Activated CD4-positive, alpha-beta T cell treated with anti-CD3 and anti-CD28 coated beads for 36 hours (primary cell): ENCODE measurements at regions of chr11 and their contacts with region 1.

Region 1: GRCh38 chr11:44621140-44621681 is 55.7 kb downstream of the CD82 start:
- DNase-seq: peak; percentile 78
- ATAC-seq: peak; percentile 52
- H3K4me3 Mint-ChIP-seq: no peak overlapping the region
- H3K27ac Mint-ChIP-seq: no peak overlapping the region
- H3K4me1 Mint-ChIP-seq: peaks cover 38% of the 10 kb centered on the region
- H3K27me3 Mint-ChIP-seq: no peaks in the 10 kb centered on the region

Region 2: GRCh38 chr11:44519989-44520737 is 101.0 kb before region 1 on chr11:
- CTCF ChIA-PET with region 1: interaction called, 11 read pairs
- POLR2A ChIA-PET with region 1: no interaction called
- intact Hi-C with region 1: no loop called
- DNase-seq: no peak
- ATAC-seq: no peak
- H3K4me3 Mint-ChIP-seq: no peak overlapping the region
- H3K27ac Mint-ChIP-seq: no peak overlapping the region
- H3K4me1 Mint-ChIP-seq: peaks cover 2% of the 10 kb centered on the region
- H3K27me3 Mint-ChIP-seq: peaks cover 12% of the 10 kb centered on the region

Region 3: GRCh38 chr11:44551456-44552139 is 69.6 kb before region 1 on chr11:
- CTCF ChIA-PET with region 1: interaction called, 77 read pairs
- POLR2A ChIA-PET with region 1: no interaction called
- intact Hi-C with region 1: loop called in 1 of 2 experiments (anchors 1 kb)
- DNase-seq: no peak
- ATAC-seq: peak; percentile 62
- H3K4me3 Mint-ChIP-seq: no peak overlapping the region
- H3K27ac Mint-ChIP-seq: no peak overlapping the region
- H3K4me1 Mint-ChIP-seq: no peaks in the 10 kb centered on the region
- H3K27me3 Mint-ChIP-seq: no peaks in the 10 kb centered on the region

Region 4: DNA sequence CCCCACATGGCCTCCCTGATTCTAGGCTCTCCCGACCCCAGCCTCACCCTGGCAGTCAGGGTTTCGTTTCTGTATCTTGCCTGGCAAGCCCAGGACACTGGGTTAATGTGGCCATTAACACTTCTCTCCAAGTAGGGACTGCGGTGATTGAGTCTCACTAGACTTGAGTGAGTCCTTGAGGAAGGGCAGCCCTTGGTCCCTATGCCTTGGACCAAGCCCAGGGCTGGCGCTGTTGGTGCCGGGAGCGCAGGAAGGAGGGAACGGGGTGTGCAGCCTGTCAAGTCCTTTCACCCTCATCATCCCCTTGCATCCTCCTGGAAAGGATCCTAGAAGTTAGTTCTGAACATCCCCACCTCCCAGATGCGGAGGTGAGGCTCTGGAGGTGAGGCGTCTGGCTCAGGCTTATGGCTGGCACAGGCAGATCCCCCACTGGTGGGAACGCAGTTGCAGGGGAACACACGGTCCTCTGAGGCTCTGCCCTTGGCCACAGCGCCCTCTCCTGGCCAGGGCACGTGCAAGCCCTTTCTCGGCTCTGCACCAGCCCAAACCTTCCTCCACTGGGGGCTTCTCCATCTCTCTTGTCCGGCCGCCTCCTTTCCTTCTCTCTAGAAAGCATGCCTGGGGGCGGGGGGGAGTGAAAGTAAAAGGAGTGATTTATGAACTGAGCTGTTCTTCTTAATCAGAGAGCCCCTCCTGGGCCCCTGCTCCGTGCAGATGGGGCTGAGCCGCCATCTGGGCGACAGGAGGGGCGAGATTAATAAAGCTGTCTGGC is 272.8 kb after region 1 on chr11:
- CTCF ChIA-PET with region 1: interaction called, 11 read pairs
- POLR2A ChIA-PET with region 1: no interaction called
- intact Hi-C with region 1: loop called (anchors 1 to 5 kb)
- DNase-seq: peak; percentile 79
- ATAC-seq: peak; percentile 93
- H3K4me3 Mint-ChIP-seq: no peak overlapping the region
- H3K27ac Mint-ChIP-seq: no peak overlapping the region
- H3K4me1 Mint-ChIP-seq: peaks cover 1% of the 10 kb centered on the region
- H3K27me3 Mint-ChIP-seq: no peaks in the 10 kb centered on the region

Region 5: GRCh38 chr11:44911029-44911814 is 290.0 kb after region 1 on chr11:
- CTCF ChIA-PET with region 1: interaction called, 6 read pairs
- POLR2A ChIA-PET with region 1: no interaction called
- intact Hi-C with region 1: loop called (anchors 1 kb)
- DNase-seq: peak; percentile 93
- ATAC-seq: peak; percentile 91
- H3K4me3 Mint-ChIP-seq: no peak overlapping the region
- H3K27ac Mint-ChIP-seq: no peak overlapping the region
- H3K4me1 Mint-ChIP-seq: peaks cover 3% of the 10 kb centered on the region
- H3K27me3 Mint-ChIP-seq: no peaks in the 10 kb centered on the region

Region 6: DNA sequence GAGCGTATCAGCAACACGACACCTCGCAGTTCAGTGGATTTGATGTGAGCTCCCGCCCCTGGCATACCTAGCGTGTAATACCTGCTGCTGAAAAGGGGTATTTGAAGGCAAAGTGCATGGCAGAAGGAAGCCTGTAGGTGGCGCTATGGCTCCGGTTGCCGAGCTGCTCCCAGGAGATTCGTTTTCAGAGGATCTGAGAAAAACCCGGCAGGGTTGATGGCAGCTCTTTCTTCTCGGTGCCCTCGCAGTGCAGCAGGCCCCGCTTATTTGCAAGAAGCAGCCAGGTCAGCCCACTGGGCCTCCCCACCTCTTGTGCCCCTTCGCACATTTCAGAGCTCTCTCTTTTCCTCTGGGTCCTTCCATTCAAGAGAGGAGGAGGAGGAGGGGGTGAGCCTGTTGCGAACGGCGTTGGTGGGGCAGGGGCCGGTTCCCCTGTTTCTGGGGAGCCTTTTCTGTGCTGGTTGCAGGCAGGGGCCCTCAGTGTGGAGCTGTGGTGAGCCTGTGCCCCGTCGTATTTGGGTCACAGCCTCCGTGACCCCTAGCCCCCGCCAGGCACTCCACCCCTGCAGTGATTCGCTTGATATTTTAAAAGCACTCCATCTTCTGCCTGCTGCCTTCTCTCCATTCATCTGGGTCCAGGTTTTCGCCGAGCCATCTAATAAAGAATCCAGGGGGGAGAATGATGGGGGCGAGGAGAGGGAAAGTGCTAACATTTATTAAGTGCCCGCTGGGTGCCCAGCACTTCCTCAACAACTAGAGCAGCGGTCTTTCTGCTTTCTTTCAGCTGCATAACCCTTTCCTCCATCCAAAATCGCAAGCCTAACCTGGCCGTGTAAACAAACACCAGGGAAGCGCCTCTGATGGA is 750.3 kb after region 1 on chr11:
- CTCF ChIA-PET with region 1: no interaction called
- POLR2A ChIA-PET with region 1: no interaction called
- intact Hi-C with region 1: no loop called
- DNase-seq: peak; percentile 84
- ATAC-seq: peak; percentile 76
- H3K4me3 Mint-ChIP-seq: no peak overlapping the region
- H3K27ac Mint-ChIP-seq: no peak overlapping the region
- H3K4me1 Mint-ChIP-seq: peaks cover 16% of the 10 kb centered on the region
- H3K27me3 Mint-ChIP-seq: peaks cover 10% of the 10 kb centered on the region

Region 7: DNA sequence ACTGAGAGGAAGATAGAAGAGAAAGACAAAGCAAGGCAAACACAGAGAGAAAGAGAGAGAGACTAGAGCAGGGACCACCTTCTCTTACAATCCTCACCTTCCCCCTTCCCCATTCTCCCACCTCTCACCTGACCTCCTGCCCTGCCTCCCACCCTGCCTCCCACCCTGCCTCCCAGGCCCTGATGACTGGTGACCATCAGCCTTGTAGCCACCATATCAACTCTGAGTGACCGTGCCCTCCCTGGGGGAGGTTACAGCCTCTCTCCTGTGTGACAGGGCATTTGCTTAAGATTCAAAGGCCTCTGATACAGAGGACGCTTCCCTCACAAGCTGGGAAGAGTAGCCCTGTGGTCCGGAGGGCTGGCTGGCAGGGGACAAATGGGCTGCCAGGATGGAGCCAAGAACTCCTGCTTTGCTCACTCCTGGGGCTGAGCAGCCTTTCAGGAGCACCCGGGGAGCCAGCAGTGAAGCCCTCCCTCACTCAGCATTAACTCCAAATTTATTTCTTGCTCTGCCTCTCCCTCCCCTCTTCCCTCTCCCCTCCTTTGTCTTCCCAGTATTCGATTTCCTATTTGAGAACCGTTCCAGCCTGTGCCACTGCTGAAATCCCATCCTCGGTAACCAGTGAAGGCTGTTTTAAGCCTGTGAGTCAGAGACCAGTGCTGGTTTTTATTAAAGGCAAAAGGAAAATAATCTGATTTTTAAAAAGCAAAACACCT is 790.2 kb after region 1 on chr11:
- CTCF ChIA-PET with region 1: no interaction called
- POLR2A ChIA-PET with region 1: no interaction called
- intact Hi-C with region 1: no loop called
- DNase-seq: no peak
- ATAC-seq: no peak
- H3K4me3 Mint-ChIP-seq: no peak overlapping the region
- H3K27ac Mint-ChIP-seq: no peak overlapping the region
- H3K4me1 Mint-ChIP-seq: no peaks in the 10 kb centered on the region
- H3K27me3 Mint-ChIP-seq: peaks cover 20% of the 10 kb centered on the region